GM12878 (cell line): ENCODE measurements at regions of chr11 and their contacts with region 1.

Region 1: DNA sequence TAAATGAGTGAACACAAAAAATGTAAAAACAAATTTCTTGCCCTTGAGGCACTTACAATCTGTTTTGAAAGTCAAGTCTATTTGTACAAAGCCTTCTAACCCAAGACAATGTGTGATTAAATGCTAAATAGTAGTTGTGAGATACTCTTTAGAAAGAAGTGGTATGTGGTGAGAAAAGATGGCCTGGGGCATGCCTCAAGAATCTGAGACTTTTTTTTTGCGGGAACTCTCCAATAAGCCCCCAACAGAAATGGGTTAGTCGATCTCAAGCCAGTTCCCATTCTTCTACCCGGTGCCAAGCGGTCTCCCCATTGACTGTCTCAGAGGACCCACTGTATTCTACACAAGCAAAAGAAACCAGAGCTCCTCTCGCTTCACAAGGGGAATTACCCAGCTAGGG is 26.9 kb upstream of the TBCEL start:
- DNase-seq: no peak
- ATAC-seq: no peak
- H3K4me3 ChIP-seq: no peak overlapping the region
- H3K27ac ChIP-seq: no peak overlapping the region
- H3K4me1 ChIP-seq: no peaks in the 10 kb centered on the region
- H3K27me3 ChIP-seq: peaks cover 0 to 6% of the 10 kb centered on the region in 2 experiments; a peak in 3 of 4 replicates
- CTCF ChIP-seq: no peak
- EP300 ChIP-seq: no peak
- POLR2A ChIP-seq: no peak
- RAD21 ChIP-seq: no peak

Region 2: DNA sequence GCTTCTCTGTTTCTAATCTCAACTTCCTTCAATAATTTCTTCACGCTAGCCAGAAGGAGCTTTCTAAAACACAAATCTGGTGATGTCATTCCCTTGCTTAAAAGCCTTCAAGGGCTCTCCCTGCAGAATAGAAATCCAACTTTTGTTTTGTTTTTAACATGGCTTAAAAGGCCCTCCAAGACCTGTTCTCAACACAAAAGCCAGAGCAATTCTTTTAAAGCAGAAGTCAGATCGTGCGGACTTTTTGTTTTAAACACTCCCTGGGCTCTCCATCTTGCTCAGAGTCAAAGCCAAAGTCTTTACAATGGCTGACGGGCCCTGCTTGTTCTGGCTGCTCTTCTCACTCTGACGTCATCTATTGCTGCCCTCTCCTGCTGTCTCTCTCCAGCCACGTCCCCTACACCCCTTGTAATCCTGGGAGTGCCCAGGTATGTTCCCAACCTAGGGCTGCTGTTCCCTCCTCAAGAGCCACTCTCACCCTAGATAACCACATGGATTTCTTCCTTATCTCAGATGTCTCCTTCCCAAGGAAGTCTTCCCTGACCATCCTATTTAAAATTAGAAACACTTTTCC is 126.6 kb after region 1 on chr11:
- CTCF ChIA-PET with region 1: no interaction called
- POLR2A ChIA-PET with region 1: no interaction called
- RAD21 ChIA-PET with region 1: no interaction called
- SMC1A ChIA-PET with region 1: no interaction called
- in situ Hi-C with region 1: no loop called
- intact Hi-C with region 1: loop called (anchors 5 kb)
- DNase-seq: no peak
- ATAC-seq: no peak
- H3K4me3 ChIP-seq: no peak overlapping the region
- H3K27ac ChIP-seq: no peak overlapping the region
- H3K4me1 ChIP-seq: no peaks in the 10 kb centered on the region
- H3K27me3 ChIP-seq: no peaks in the 10 kb centered on the region; a peak in 2 of 4 replicates
- CTCF ChIP-seq: no peak
- EP300 ChIP-seq: no peak
- POLR2A ChIP-seq: no peak
- RAD21 ChIP-seq: no peak